ENCODE measurements at regions of chr1 and their contacts with region 1.

Region 1: DNA sequence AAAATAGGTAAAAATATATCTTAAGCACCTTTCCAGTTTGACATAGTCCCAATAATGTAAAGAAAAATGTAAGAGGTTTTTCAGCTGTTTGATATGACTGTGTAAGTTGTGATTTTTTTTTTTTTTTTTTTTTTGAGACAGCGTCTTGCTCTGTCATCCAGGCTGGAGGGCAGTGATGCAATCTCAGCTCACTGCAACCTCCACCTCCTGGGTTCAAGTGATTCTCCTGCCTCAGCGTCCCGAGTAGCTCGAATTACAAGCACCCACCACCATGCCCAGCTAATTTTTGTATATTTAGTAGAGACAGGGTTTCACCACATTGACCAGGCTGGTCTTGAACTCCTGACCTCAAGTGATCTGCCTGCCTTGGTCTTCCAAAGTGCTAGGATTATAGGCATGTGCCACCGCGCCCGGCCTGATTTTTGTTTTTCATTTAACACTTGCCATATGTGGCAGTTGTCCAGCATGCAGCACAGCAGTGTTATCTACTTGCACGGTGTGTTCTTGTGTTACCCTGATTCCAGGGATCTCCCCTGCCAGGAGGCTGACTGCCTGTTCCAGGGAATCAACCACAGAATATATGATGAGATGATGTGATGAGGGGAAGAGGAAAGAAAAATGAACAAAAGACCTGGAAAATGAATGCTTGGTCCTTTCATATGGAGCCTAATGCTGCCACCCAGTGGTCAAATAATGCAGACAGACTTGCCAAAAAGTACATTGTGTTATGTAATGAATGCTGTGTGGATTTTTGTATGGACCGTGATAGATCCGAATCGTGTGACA is 79.0 kb downstream of the RAVER2 start:
- DNase-seq: peak; percentile 76 to 86 (median 80)
- H3K4me3 ChIP-seq: peak overlapping the region in 1 of 7 experiments; percentile 6
- H3K27ac ChIP-seq: no peak overlapping the region
- H3K4me1 ChIP-seq: peaks cover 0 to 3% (median 2%) of the 10 kb centered on the region in 4 experiments
- H3K27me3 ChIP-seq: no peaks in the 10 kb centered on the region

Region 2: GRCh38 chr1:64268653-64269557 is 555.0 kb before region 1 on chr1:
- CTCF ChIA-PET with region 1: interaction called, 19 read pairs
- POLR2A ChIA-PET with region 1: no interaction called
- DNase-seq: peak; percentile 82 to 90 (median 86)
- H3K4me3 ChIP-seq: no peak overlapping the region
- H3K27ac ChIP-seq: no peak overlapping the region
- H3K4me1 ChIP-seq: no peaks in the 10 kb centered on the region
- H3K27me3 ChIP-seq: no peaks in the 10 kb centered on the region

Region 3: GRCh38 chr1:64686828-64687724 is 136.8 kb before region 1 on chr1:
- CTCF ChIA-PET with region 1: interaction called, 16 read pairs
- POLR2A ChIA-PET with region 1: no interaction called
- DNase-seq: peak; percentile 57 to 79 (median 76)
- H3K4me3 ChIP-seq: no peak overlapping the region
- H3K27ac ChIP-seq: no peak overlapping the region
- H3K4me1 ChIP-seq: peaks cover 0 to 13% (median 6%) of the 10 kb centered on the region in 4 experiments
- H3K27me3 ChIP-seq: no peaks in the 10 kb centered on the region

Region 4: DNA sequence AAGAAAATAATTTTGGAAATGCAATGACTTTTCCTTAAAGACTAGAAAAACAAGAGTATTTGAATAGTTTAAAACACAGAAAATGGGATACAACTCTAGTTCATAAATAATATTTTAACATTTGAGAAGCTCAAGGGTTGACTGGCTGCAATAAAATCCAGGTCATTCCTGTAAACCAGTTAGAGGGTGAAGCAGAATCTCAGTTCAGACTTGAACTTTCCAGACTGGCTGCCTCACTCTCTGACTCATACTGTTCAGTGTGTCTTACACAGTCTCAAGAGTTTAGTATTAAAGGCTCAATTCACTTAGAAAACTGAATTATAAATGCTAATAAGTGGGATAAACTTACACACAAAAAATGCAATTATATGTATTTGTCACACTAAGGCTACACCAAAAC is 10.8 kb after region 1 on chr1:
- CTCF ChIA-PET with region 1: interaction called, 15 read pairs
- POLR2A ChIA-PET with region 1: no interaction called
- DNase-seq: no peak
- H3K4me3 ChIP-seq: no peak overlapping the region
- H3K27ac ChIP-seq: peak overlapping the region in 1 of 2 experiments; percentile 2
- H3K4me1 ChIP-seq: no peaks in the 10 kb centered on the region
- H3K27me3 ChIP-seq: no peaks in the 10 kb centered on the region